Endothelial cell of umbilical vein (primary cell): ENCODE measurements at regions of chr16 and their contacts with region 1.

Region 1: DNA sequence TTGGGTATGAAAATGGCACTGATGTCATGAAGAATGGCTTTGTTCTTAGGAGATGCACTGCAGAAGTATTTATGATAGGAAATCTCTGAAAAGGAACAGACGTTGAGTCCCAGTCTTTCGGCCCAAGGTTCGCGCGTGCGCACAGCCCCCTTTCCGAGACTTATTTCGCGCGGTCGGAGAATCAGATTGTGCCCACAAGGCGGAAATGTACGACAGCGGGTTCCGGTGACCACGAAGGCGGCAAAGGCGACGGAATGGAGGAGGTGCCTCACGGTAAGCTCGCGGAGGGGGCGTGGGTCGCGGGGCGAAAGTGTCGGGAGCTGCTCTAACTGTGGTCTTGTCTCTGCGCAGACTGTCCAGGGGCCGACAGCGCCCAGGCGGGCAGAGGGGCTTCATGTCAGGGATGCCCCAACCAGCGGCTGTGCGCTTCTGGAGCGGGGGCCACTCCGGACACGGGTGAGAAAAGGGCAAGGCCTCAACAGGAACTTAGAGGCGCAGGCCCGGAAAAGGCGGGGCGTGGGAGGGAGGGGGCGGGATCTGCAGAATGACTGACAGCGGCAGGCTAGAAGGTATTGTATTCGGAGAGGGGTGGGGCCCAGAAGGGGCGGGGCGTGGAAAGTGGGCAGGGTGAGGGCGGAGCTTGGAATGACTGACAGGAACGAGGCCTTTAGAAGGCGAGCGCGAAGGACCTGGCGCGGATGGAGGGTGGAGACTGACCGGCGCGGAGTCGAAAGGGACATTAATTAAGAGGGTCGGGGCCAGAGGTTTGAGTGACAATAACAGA is at the start of gene NUBP1:
- DNase-seq: peak; percentile 100
- H3K4me3 ChIP-seq: peak within 1 kb of the TSS; percentile 3 to 72 (median 56)
- H3K27ac ChIP-seq: peak within 1 kb of the TSS; percentile 80
- H3K4me1 ChIP-seq: peaks cover 7% of the 10 kb centered on the region
- H3K27me3 ChIP-seq: no peaks in the 10 kb centered on the region
- CTCF ChIP-seq: no peak
- POLR2A ChIP-seq: peak; percentile 86
- total RNA-seq, gene NUBP1: 23.6 and 28.7 TPM in 2 replicates

Region 2: GRCh38 chr16:10828851-10829731 is 85.3 kb after region 1 on chr16:
- CTCF ChIA-PET with region 1: no interaction called
- POLR2A ChIA-PET with region 1: interaction called, 3 read pairs
- dilution Hi-C with region 1: no loop called
- intact Hi-C with region 1: loop called (anchors 5 kb)
- DNase-seq: peak; percentile 92
- H3K4me3 ChIP-seq: no peak overlapping the region
- H3K27ac ChIP-seq: no peak overlapping the region
- H3K4me1 ChIP-seq: peaks cover 12% of the 10 kb centered on the region
- H3K27me3 ChIP-seq: peaks cover 0 to 4% of the 10 kb centered on the region in 2 experiments
- CTCF ChIP-seq: no peak
- POLR2A ChIP-seq: no peak